Cardiac septum (tissue), 1 donor: ENCODE measurements at regions of chr5 and their contacts with region 1.

Region 1: GRCh38 chr5:95730730-95731570 is at the start of gene RHOBTB3:
- DNase-seq: peak; percentile 93
- total RNA-seq, gene RHOBTB3: 79.0 TPM

Region 2: DNA sequence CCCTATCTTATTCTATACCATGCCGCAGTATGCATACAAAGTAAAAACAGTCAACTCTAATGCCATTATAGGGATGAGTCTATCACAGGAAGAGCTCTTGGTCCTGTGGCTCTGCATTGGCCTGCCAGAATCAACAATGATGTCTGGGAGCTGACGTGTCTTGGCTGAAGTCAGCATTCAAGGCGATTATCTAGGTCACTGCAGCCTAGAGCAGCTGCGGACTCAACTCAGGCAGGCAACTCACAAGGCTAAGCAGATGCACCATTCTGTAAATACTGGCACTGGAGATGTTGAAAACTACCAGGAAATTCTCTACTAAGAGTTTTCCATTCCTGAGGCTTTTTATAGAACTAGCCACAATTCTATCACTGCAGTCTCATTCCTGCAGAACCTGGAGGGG is 61.4 kb before region 1 on chr5:
- intact Hi-C with region 1: loop called (anchors 2 kb)
- DNase-seq: peak; percentile 80

Region 3: DNA sequence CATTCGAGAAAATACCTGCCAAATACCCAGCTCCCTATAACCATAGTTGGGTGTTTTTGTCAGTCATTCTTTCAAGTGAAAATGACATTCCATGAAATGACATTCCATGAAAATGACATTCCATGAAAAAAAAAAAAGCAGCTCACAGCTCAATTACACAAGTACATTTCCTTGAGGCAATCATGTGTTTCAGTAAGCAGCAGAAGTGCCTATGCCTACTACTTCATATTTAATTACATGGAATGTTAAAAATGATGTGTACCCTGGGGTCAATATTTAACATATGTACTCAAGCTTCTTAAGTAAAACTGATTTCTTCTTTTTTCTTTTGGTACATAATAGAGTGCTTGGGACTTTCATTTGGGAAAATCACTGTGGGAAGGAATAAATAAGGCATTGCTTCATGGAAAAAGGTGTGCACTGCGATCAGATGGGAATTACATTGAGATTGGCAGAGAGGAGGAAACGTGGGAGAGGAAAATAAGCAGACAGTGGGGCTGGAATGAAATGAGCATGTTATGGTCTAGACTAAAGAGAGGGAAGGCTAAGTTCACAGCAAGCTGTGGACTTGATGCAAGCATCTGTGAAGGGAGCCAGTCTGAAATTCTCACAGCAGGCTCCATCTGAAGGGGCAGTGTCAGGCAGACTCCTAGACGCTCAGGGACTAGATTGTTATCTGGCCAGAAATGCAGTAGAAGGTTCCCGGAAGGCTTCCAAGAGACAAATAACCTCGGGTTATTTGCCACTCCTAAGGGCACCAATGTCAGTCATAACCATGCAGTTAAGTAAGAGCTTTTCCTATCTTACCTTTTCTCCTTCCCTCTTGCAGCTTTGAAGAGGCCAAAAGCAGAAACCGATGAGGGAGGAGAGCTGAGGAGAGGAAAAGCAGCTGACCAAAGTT is 32.9 kb before region 1 on chr5:
- intact Hi-C with region 1: no loop called
- DNase-seq: no peak